Activated naive CD4-positive, alpha-beta T cell treated with anti-CD3 and anti-CD28 coated beads for 36 hours (primary cell): ENCODE measurements at regions of chr3 and their contacts with region 1.

Region 1: DNA sequence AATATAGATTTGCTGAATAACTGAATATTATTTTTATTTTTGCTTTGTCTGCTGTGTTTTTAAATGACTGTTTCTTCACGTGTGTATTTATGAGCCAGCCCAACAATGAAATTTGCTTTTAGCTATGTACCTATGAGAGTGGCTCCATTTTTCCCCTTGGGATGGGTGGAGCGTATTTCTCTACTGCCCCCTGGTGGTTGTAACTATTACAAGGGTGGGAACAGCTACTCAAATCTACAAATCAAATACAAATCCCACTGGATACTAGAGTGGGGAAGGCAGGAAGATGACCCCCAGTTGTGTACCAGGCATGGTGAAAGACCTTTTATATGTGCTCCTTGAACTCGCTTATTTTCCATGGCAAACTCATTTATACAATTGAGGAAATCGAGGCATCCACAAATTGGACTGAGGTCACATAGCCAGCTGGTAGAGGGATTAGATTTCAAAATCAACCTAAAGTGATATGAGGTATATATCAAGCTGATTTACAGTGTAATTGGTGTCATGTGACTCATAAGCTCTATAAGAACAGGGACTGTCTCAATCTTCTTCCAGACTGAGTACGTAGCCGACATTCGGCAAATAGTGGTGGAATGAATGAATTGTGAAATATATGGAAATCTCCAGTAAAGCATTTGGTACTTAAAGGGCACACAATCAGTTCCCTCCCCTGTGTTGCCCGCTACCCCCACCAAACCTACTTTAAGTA is 69.5 kb upstream of the VEPH1 start:
- DNase-seq: peak; percentile 36
- H3K4me3 Mint-ChIP-seq: no peak overlapping the region
- H3K27ac Mint-ChIP-seq: no peak overlapping the region
- H3K4me1 Mint-ChIP-seq: no peaks in the 10 kb centered on the region
- H3K27me3 Mint-ChIP-seq: peaks cover 11% of the 10 kb centered on the region

Region 2: GRCh38 chr3:157201648-157202278 is 371.0 kb before region 1 on chr3:
- CTCF ChIA-PET with region 1: no interaction called
- intact Hi-C with region 1: loop called (anchors 2 kb)
- DNase-seq: no peak
- H3K4me3 Mint-ChIP-seq: no peak overlapping the region
- H3K27ac Mint-ChIP-seq: no peak overlapping the region
- H3K4me1 Mint-ChIP-seq: no peaks in the 10 kb centered on the region
- H3K27me3 Mint-ChIP-seq: no peaks in the 10 kb centered on the region

Region 3: GRCh38 chr3:157532529-157533297 is 40.0 kb before region 1 on chr3:
- CTCF ChIA-PET with region 1: interaction called, 101 read pairs
- intact Hi-C with region 1: loop called (anchors 1 kb)
- DNase-seq: peak; percentile 31
- H3K4me3 Mint-ChIP-seq: no peak overlapping the region
- H3K27ac Mint-ChIP-seq: no peak overlapping the region
- H3K4me1 Mint-ChIP-seq: no peaks in the 10 kb centered on the region
- H3K27me3 Mint-ChIP-seq: no peaks in the 10 kb centered on the region

Region 4: GRCh38 chr3:157559401-157559800 is 13.3 kb before region 1 on chr3:
- CTCF ChIA-PET with region 1: interaction called, 10 read pairs
- intact Hi-C with region 1: no loop called
- DNase-seq: no peak
- H3K4me3 Mint-ChIP-seq: no peak overlapping the region
- H3K27ac Mint-ChIP-seq: no peak overlapping the region
- H3K4me1 Mint-ChIP-seq: no peaks in the 10 kb centered on the region
- H3K27me3 Mint-ChIP-seq: peaks cover 8% of the 10 kb centered on the region

Region 5: GRCh38 chr3:157844800-157845565 is 272.3 kb after region 1 on chr3:
- CTCF ChIA-PET with region 1: no interaction called
- intact Hi-C with region 1: no loop called
- DNase-seq: no peak
- H3K4me3 Mint-ChIP-seq: no peak overlapping the region
- H3K27ac Mint-ChIP-seq: no peak overlapping the region
- H3K4me1 Mint-ChIP-seq: no peaks in the 10 kb centered on the region
- H3K27me3 Mint-ChIP-seq: no peaks in the 10 kb centered on the region